Activated CD8-positive, alpha-beta memory T cell treated with anti-CD3 and anti-CD28 coated beads, Interleukin-2, amount 10 ng/mL, durations not matched to agents 7 days and 5 days (primary cell): ENCODE measurements at regions of chr2 and their contacts with region 1.

Region 1: GRCh38 chr2:227890495-227891079 is 19.2 kb downstream of the DAW1 start:
- DNase-seq: no peak
- ATAC-seq: no peak
- H3K4me3 Mint-ChIP-seq: no peak overlapping the region
- H3K27ac Mint-ChIP-seq: no peak overlapping the region
- H3K4me1 Mint-ChIP-seq: no peaks in the 10 kb centered on the region
- H3K27me3 Mint-ChIP-seq: peaks cover 3% of the 10 kb centered on the region

Region 2: DNA sequence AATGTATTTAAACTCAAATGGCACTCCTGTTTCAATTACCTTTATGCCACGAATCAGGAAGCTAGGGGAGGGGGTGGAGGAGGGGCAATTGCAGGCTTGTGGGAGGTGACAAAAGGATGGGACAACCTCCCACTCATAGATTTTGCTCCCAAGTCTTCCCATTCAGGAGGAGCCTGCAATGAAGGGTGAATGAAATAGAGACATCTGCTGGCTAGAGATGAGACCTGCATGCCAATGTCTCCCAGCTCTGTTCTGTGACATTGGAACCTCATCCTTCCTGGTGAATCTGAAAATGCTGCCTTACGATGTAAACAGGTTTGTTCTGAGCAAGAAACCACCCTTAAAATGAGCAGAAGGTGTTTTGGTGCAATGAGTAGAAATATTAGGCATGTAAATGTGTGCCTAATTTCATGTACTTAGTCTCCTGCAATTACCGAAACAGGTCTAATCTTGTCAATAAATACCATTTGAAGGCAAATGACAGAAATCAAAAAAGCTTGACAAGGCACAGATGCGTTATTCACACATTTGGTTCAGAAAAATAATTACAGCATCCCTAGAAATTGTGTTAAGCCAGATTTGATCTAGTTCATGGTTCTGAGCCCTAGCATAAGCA is 1383.2 kb after region 1 on chr2:
- CTCF ChIA-PET with region 1: interaction called, 12 read pairs
- DNase-seq: no peak
- ATAC-seq: no peak
- H3K4me3 Mint-ChIP-seq: no peak overlapping the region
- H3K27ac Mint-ChIP-seq: no peak overlapping the region
- H3K4me1 Mint-ChIP-seq: no peaks in the 10 kb centered on the region
- H3K27me3 Mint-ChIP-seq: peaks cover 26% of the 10 kb centered on the region